Activated naive CD4-positive, alpha-beta T cell treated with anti-CD3 and anti-CD28 coated beads for 36 hours (primary cell): ENCODE measurements at regions of chr19 and their contacts with region 1.

Region 1: GRCh38 chr19:6501740-6502648 is at the start of gene TUBB4A:
- DNase-seq: peak; percentile 58
- H3K4me3 Mint-ChIP-seq: peak within 1 kb of the TSS; percentile 68
- H3K27ac Mint-ChIP-seq: no peak within 1 kb of the TSS
- H3K4me1 Mint-ChIP-seq: peaks cover 9% of the 10 kb centered on the region
- H3K27me3 Mint-ChIP-seq: peaks cover 5% of the 10 kb centered on the region
- total RNA-seq, gene TUBB4A: 6.4 to 7.0 TPM

Region 2: DNA sequence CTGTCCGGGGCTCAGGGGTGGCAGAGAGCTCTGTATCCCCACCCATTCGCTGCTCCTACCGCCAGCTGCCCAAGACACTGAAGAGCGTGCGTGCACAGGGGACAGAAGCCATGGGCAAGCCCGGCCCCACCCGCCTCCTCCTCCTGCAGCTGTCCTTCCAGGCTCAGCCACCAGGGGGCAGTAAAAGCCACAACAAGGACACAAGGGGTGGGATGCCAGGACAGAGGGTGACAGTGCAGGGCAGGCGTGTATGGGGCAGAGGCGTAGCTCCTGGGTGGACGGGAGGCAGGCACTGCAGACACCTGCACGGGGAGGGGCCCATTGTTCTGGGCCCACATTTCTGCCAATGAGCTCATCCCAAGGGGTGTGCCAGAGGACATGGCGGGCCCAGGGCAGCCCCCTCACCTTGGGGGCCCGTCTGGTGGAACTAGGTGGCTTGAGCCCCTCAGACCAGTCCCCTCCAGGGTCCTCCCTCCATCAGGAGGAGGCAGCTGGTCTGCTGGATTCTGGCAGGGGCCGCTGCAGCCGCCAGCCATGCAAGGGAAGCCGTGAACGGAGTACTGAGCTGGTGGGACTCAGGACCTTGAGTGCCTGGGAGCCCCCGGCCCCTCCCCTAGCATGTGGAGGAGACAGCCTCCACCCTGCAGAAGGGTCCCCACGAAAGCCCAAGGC is 283.4 kb before region 1 on chr19:
- CTCF ChIA-PET with region 1: no interaction called
- intact Hi-C with region 1: loop called (anchors 2 kb)
- DNase-seq: peak; percentile 91
- H3K4me3 Mint-ChIP-seq: no peak overlapping the region
- H3K27ac Mint-ChIP-seq: no peak overlapping the region
- H3K4me1 Mint-ChIP-seq: no peaks in the 10 kb centered on the region
- H3K27me3 Mint-ChIP-seq: no peaks in the 10 kb centered on the region

Region 3: GRCh38 chr19:6279931-6280591 is 221.9 kb before region 1 on chr19 and contains the start of gene MLLT1:
- CTCF ChIA-PET with region 1: no interaction called
- intact Hi-C with region 1: loop called (anchors 10 kb)
- DNase-seq: peak; percentile 97
- H3K4me3 Mint-ChIP-seq: peak within 1 kb of the TSS; percentile 94
- H3K27ac Mint-ChIP-seq: peak within 1 kb of the TSS; percentile 87
- H3K4me1 Mint-ChIP-seq: peaks cover 33% of the 10 kb centered on the region
- H3K27me3 Mint-ChIP-seq: no peaks in the 10 kb centered on the region
- total RNA-seq, gene MLLT1: 30.6 to 31.3 TPM

Region 4: DNA sequence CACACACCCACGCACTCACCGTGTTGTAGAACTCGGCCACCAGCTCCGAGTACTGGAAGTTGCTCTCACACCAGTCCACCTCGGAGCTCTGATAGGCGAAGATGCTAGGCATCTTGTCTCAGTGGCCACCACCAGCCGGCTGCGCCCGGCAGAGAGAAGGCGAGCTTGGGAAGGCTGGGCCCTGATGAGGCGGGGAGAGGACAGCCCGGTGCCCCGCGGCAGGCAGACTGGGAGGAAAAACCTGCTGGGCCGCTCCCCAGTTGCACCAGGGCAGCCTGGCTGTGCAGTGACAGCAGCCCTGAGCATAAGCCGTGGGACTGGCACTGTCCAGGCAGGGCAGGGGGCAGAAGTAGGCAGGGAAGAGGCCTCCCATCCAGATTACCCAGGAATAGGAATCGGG is 168.6 kb before region 1 on chr19 and contains the start of gene ACER1:
- CTCF ChIA-PET with region 1: interaction called, 11 read pairs
- intact Hi-C with region 1: no loop called
- DNase-seq: no peak
- H3K4me3 Mint-ChIP-seq: no peak within 1 kb of the TSS
- H3K27ac Mint-ChIP-seq: no peak within 1 kb of the TSS
- H3K4me1 Mint-ChIP-seq: no peaks in the 10 kb centered on the region
- H3K27me3 Mint-ChIP-seq: no peaks in the 10 kb centered on the region
- total RNA-seq, gene ACER1: not detected

Region 5: GRCh38 chr19:6481541-6482342 is 20.3 kb before region 1 on chr19 and contains the start of gene DENND1C:
- CTCF ChIA-PET with region 1: interaction called, 7 read pairs
- intact Hi-C with region 1: loop called (anchors 2 kb)
- DNase-seq: peak; percentile 86
- H3K4me3 Mint-ChIP-seq: peak within 1 kb of the TSS; percentile 95
- H3K27ac Mint-ChIP-seq: peak within 1 kb of the TSS; percentile 94
- H3K4me1 Mint-ChIP-seq: peaks cover 31% of the 10 kb centered on the region
- H3K27me3 Mint-ChIP-seq: no peaks in the 10 kb centered on the region
- total RNA-seq, gene DENND1C: 55.7 to 57.9 TPM

Region 6: DNA sequence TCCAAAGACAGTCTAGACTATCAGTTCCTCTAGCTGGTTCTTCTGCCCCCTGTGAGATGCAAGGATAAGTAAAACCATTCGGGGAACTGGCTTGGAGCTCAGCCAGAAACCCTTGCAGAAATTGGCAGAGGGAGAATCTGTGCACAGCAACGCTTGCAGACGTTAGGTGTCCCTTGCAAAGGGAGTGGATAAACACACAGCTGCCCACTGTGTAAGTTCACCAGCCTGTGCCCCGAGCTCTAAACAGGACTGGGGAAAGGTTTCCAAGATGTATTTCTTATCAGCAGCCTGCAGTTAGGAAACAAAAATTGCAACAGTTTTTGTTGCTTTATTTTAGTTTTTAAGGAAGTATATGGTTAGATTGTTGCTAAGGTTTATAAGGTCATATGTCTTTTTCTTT is 366.4 kb after region 1 on chr19:
- CTCF ChIA-PET with region 1: no interaction called
- intact Hi-C with region 1: no loop called
- DNase-seq: no peak
- H3K4me3 Mint-ChIP-seq: no peak overlapping the region
- H3K27ac Mint-ChIP-seq: no peak overlapping the region
- H3K4me1 Mint-ChIP-seq: peaks cover 19% of the 10 kb centered on the region
- H3K27me3 Mint-ChIP-seq: no peaks in the 10 kb centered on the region